ENCODE measurements at regions of chr12 and their contacts with region 1.

Region 1: DNA sequence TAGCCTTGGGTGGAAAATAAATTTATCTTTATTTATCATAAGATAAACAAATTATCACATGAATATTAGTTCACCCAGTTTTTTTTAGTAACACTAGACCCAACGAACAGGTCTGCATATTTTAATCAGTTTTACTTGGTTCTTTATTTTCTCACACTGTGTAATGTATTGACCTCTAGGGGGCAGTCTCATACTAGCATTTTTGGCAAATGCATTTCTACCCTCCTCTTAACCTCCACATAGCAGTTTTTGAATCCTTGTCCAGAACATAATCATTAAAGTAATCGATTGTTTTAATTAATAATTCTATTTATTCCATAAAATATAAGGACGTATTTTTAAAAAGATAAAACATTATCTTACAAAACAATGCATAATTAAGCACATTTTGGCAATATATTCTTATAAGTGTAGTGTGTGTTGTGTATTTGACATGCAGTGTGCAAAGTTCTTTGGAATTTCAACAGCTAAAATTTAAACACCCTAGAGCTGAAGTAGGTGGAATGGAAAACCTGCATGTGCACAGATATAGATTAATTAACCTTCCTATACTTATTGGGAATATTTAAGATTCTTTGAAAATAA is 31.6 kb upstream of the PTPRQ start:
- DNase-seq: no peak
- H3K4me3 ChIP-seq: no peak overlapping the region
- H3K27ac ChIP-seq: no peak overlapping the region
- H3K4me1 ChIP-seq: no peaks in the 10 kb centered on the region
- H3K27me3 ChIP-seq: no peaks in the 10 kb centered on the region
- CTCF ChIP-seq: peak in 2 of 3 experiments; percentile 47 to 57; a peak in 2 of 4 replicates
- EP300 ChIP-seq: no peak
- POLR2A ChIP-seq: no peak
- RAD21 ChIP-seq: peak; percentile 86 to 87

Region 2: GRCh38 chr12:80205960-80206359 is 206.5 kb before region 1 on chr12:
- CTCF ChIA-PET with region 1: no interaction called
- POLR2A ChIA-PET with region 1: no interaction called
- DNase-seq: no peak
- H3K4me3 ChIP-seq: no peak overlapping the region
- H3K27ac ChIP-seq: no peak overlapping the region
- H3K4me1 ChIP-seq: no peaks in the 10 kb centered on the region
- H3K27me3 ChIP-seq: no peaks in the 10 kb centered on the region
- CTCF ChIP-seq: no peak
- EP300 ChIP-seq: no peak
- POLR2A ChIP-seq: no peak
- RAD21 ChIP-seq: no peak

Region 3: GRCh38 chr12:80400571-80400991 is 11.9 kb before region 1 on chr12:
- CTCF ChIA-PET with region 1: interaction called, 10 read pairs
- POLR2A ChIA-PET with region 1: no interaction called
- DNase-seq: peak in 1 of 2 experiments; percentile 52
- H3K4me3 ChIP-seq: no peak overlapping the region
- H3K27ac ChIP-seq: no peak overlapping the region
- H3K4me1 ChIP-seq: no peaks in the 10 kb centered on the region
- H3K27me3 ChIP-seq: no peaks in the 10 kb centered on the region
- CTCF ChIP-seq: no peak
- EP300 ChIP-seq: no peak
- POLR2A ChIP-seq: no peak
- RAD21 ChIP-seq: no peak

Region 4: DNA sequence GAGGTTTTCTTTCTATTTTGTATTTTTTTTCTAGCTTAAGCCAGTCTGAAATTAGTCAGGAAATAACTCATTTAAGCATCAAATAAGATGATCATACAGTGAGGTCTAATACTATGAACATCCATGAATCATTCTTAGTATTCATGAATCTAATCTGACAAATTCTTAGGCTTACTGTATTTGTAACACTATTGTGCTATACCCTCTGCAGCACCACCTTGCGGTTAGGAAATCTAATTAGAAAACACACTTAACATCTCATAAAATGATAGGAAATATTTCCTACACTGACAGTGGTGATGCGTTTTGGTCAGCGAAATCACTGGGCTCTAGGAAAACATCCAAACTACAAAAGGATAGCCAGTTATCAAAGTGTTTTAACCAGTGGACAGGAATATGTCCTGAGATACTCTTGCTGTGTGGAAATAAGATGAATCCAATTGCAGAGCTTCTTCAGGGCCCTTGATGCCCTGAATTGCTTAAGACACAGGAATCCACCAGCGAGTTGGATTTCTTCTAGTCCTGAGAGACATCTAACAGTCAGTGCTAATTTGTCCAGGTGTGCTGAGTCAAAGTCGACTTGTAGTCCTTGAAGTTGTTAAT is 185.6 kb after region 1 on chr12:
- CTCF ChIA-PET with region 1: interaction called, 10 read pairs
- POLR2A ChIA-PET with region 1: no interaction called
- DNase-seq: no peak
- H3K4me3 ChIP-seq: no peak overlapping the region
- H3K27ac ChIP-seq: no peak overlapping the region
- H3K4me1 ChIP-seq: no peaks in the 10 kb centered on the region
- H3K27me3 ChIP-seq: no peaks in the 10 kb centered on the region
- CTCF ChIP-seq: peak in 2 of 3 experiments; percentile 27 to 53; a peak in 2 of 4 replicates
- EP300 ChIP-seq: no peak
- POLR2A ChIP-seq: no peak
- RAD21 ChIP-seq: peak; percentile 36 to 39; a peak in 3 of 4 replicates

Region 5: DNA sequence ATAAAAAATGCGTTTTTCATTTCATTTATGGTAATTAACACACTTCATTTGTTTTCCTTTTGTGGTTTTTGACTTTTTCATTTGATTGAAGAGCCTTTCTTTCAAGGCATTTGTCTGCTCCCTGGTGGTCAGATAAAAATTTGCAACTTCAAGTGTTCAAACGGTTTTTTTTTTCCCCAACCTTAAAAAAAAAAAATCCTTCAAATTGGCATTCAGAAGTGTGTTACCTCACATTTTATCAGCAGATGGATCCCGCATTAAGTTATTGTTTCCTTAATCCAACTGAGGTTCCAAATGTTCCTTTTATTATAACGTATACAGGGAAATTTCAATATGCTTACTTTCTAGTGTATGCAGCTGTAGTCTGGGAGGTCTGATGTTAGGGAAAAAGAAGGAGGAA is 351.4 kb after region 1 on chr12:
- CTCF ChIA-PET with region 1: interaction called, 25 read pairs
- POLR2A ChIA-PET with region 1: no interaction called
- DNase-seq: no peak
- H3K4me3 ChIP-seq: no peak overlapping the region
- H3K27ac ChIP-seq: no peak overlapping the region
- H3K4me1 ChIP-seq: peaks cover 0 to 6% (median 2%) of the 10 kb centered on the region in 4 experiments; a peak in 1 of 7 replicates
- H3K27me3 ChIP-seq: no peaks in the 10 kb centered on the region
- CTCF ChIP-seq: peak in 2 of 3 experiments; percentile 31 to 42; a peak in 2 of 4 replicates
- EP300 ChIP-seq: no peak
- POLR2A ChIP-seq: no peak
- RAD21 ChIP-seq: peak; percentile 77 to 80

Measured in H1 (cell line).